Naive thymus-derived CD8-positive, alpha-beta T cell (primary cell): ENCODE measurements at regions of chr6 and their contacts with region 1.

Region 1: GRCh38 chr6:5851261-5851757 is 155.4 kb downstream of the NRN1 start:
- DNase-seq: peak; percentile 51 to 83 (median 68)
- ATAC-seq: peak; percentile 98 to 99
- H3K4me3 Mint-ChIP-seq: peak overlapping the region; percentile 80 to 94 (median 89)
- H3K27ac Mint-ChIP-seq: peak overlapping the region in 8 of 10 donors; percentile 62 to 95 (median 93)
- H3K4me1 Mint-ChIP-seq: peaks cover 6 to 10% (median 7%) of the 10 kb centered on the region in 4 donors
- H3K27me3 Mint-ChIP-seq: peaks cover 0 to 10% (median 3%) of the 10 kb centered on the region in 5 donors

Region 2: DNA sequence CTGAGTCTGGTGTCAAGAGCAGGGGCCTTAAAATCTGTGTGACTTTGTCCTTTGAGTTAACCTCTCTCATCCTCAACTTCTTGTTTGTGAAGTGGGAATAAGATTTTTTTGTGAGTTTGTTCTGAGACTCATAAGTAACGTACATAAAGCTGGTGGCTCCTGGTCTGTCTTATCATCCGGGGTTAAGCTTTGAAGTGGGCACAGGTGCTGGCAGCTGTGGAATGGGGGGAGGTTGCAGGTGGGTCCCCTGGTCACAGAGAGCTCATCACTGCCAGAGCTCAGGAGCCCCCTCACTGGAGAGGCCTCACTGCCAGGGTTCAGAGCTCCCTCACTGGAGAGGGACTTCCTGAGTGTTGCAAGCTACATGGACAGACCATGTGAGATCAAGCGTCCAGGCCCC is 18.6 kb before region 1 on chr6:
- POLR2A ChIA-PET with region 1: interaction called, 11 read pairs
- DNase-seq: no peak
- ATAC-seq: no peak
- H3K4me3 Mint-ChIP-seq: peak overlapping the region in 9 of 10 donors; percentile 18 to 84 (median 64)
- H3K27ac Mint-ChIP-seq: peak overlapping the region; percentile 69 to 97 (median 92)
- H3K4me1 Mint-ChIP-seq: peaks cover 23 to 64% (median 54%) of the 10 kb centered on the region in 4 donors
- H3K27me3 Mint-ChIP-seq: no peaks in the 10 kb centered on the region